Natural killer cell (primary cell): ENCODE measurements at regions of chr19 and their contacts with region 1.

Region 1: GRCh38 chr19:8580710-8581281 is 3.6 kb upstream of the MYO1F start:
- DNase-seq: peak; percentile 90 to 93
- ATAC-seq: peak; percentile 72 to 89 (median 77)
- H3K4me3 ChIP-seq: no peak overlapping the region
- H3K4me3 Mint-ChIP-seq: peak overlapping the region; percentile 9
- H3K27ac ChIP-seq: no peak overlapping the region
- H3K27ac Mint-ChIP-seq: no peak overlapping the region
- H3K4me1 ChIP-seq: peaks cover 42% of the 10 kb centered on the region
- H3K4me1 Mint-ChIP-seq: peaks cover 20 to 32% of the 10 kb centered on the region in 2 donors
- H3K27me3 ChIP-seq: no peaks in the 10 kb centered on the region
- H3K27me3 Mint-ChIP-seq: no peaks in the 10 kb centered on the region
- CTCF ChIP-seq: peak; percentile 100

Region 2: GRCh38 chr19:8352134-8352827 is 228.5 kb before region 1 on chr19:
- intact Hi-C with region 1: loop called (anchors 5 kb)
- DNase-seq: no peak
- ATAC-seq: no peak
- H3K4me3 ChIP-seq: no peak overlapping the region
- H3K4me3 Mint-ChIP-seq: no peak overlapping the region
- H3K27ac ChIP-seq: no peak overlapping the region
- H3K27ac Mint-ChIP-seq: no peak overlapping the region
- H3K4me1 ChIP-seq: peaks cover 9% of the 10 kb centered on the region
- H3K4me1 Mint-ChIP-seq: peaks cover 4 to 5% of the 10 kb centered on the region in 2 donors
- H3K27me3 ChIP-seq: peaks cover 6% of the 10 kb centered on the region
- H3K27me3 Mint-ChIP-seq: peaks cover 15 to 18% of the 10 kb centered on the region in 2 donors
- CTCF ChIP-seq: no peak

Region 3: GRCh38 chr19:8569066-8569771 is 11.6 kb before region 1 on chr19:
- intact Hi-C with region 1: loop called (anchors 1 kb)
- DNase-seq: peak; percentile 70 to 89
- ATAC-seq: peak; percentile 62 to 82 (median 74)
- H3K4me3 ChIP-seq: peak overlapping the region; percentile 9
- H3K4me3 Mint-ChIP-seq: peak overlapping the region; percentile 91
- H3K27ac ChIP-seq: peak overlapping the region; percentile 83
- H3K27ac Mint-ChIP-seq: peak overlapping the region; percentile 90 to 97
- H3K4me1 ChIP-seq: peaks cover 100% of the 10 kb centered on the region
- H3K4me1 Mint-ChIP-seq: peaks cover 71 to 84% of the 10 kb centered on the region in 2 donors
- H3K27me3 ChIP-seq: no peaks in the 10 kb centered on the region
- H3K27me3 Mint-ChIP-seq: no peaks in the 10 kb centered on the region
- CTCF ChIP-seq: no peak

Region 4: GRCh38 chr19:8592231-8593009 is 11.6 kb after region 1 on chr19:
- intact Hi-C with region 1: loop called (anchors 2 kb)
- DNase-seq: peak; percentile 97 to 99
- ATAC-seq: peak; percentile 86 to 94 (median 87)
- H3K4me3 ChIP-seq: peak overlapping the region; percentile 30
- H3K4me3 Mint-ChIP-seq: peak overlapping the region; percentile 82
- H3K27ac ChIP-seq: no peak overlapping the region
- H3K27ac Mint-ChIP-seq: peak overlapping the region; percentile 72 to 81
- H3K4me1 ChIP-seq: peaks cover 21% of the 10 kb centered on the region
- H3K4me1 Mint-ChIP-seq: peaks cover 24 to 38% of the 10 kb centered on the region in 2 donors
- H3K27me3 ChIP-seq: no peaks in the 10 kb centered on the region
- H3K27me3 Mint-ChIP-seq: no peaks in the 10 kb centered on the region
- CTCF ChIP-seq: no peak

Region 5: DNA sequence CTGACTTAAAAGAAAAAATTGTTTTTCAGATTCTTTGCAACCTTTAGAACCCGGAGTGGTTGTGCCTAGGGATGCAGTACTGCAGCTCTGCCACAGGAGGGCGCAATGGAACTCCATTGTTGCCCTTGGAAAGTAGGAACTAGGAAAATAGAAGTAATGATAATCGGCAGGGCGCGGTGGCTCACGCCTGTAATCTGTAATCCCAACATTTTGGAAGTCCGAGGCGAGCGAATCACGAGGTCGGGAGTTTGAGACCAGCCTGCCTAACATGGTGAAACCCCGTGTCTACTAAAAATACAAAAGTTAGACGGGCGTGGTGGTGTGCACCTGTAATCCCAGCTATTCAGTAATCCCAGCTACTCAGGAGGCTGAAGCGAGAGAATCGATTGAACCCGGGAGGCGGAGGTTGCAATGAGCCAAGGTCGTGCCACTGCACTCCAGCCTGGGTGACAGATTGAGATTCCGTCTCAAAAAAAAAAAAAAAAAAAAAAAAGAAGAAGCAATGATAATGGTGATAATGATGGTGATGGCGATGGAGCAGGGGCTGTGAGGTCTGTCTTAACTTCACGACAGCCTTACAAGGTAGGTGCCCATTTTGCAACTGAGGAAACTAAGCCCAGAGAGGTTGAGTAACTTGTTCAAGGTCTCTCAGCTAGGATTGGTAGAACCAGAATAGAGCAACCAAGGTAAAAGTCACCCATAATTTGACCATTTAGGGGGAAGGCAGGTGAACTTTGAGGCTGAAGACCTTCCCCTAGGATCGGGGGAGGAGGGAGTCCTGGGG is 35.2 kb after region 1 on chr19:
- intact Hi-C with region 1: loop called (anchors 5 kb)
- DNase-seq: peak; percentile 56 to 81
- ATAC-seq: peak; percentile 48 to 76 (median 58)
- H3K4me3 ChIP-seq: no peak overlapping the region
- H3K4me3 Mint-ChIP-seq: peak overlapping the region; percentile 11
- H3K27ac ChIP-seq: no peak overlapping the region
- H3K27ac Mint-ChIP-seq: peak overlapping the region; percentile 64 to 67
- H3K4me1 ChIP-seq: peaks cover 37% of the 10 kb centered on the region
- H3K4me1 Mint-ChIP-seq: peaks cover 27 to 38% of the 10 kb centered on the region in 2 donors
- H3K27me3 ChIP-seq: no peaks in the 10 kb centered on the region
- H3K27me3 Mint-ChIP-seq: peaks cover 0 to 12% of the 10 kb centered on the region in 2 donors
- CTCF ChIP-seq: peak; percentile 99

Region 6: GRCh38 chr19:8641908-8642547 is 61.2 kb after region 1 on chr19:
- intact Hi-C with region 1: loop called (anchors 1 kb)
- DNase-seq: peak in 1 of 2 donors; percentile 75
- ATAC-seq: peak; percentile 78 to 93 (median 89)
- H3K4me3 ChIP-seq: no peak overlapping the region
- H3K4me3 Mint-ChIP-seq: no peak overlapping the region
- H3K27ac ChIP-seq: no peak overlapping the region
- H3K27ac Mint-ChIP-seq: no peak overlapping the region
- H3K4me1 ChIP-seq: peaks cover 9% of the 10 kb centered on the region
- H3K4me1 Mint-ChIP-seq: peaks cover 15 to 24% of the 10 kb centered on the region in 2 donors
- H3K27me3 ChIP-seq: no peaks in the 10 kb centered on the region
- H3K27me3 Mint-ChIP-seq: peaks cover 5 to 19% of the 10 kb centered on the region in 2 donors
- CTCF ChIP-seq: peak; percentile 79

Region 7: GRCh38 chr19:8697671-8698432 is 117.1 kb after region 1 on chr19:
- intact Hi-C with region 1: loop called (anchors 2 kb)
- DNase-seq: peak in 1 of 2 donors; percentile 28
- ATAC-seq: no peak
- H3K4me3 ChIP-seq: no peak overlapping the region
- H3K4me3 Mint-ChIP-seq: no peak overlapping the region
- H3K27ac ChIP-seq: no peak overlapping the region
- H3K27ac Mint-ChIP-seq: no peak overlapping the region
- H3K4me1 ChIP-seq: peaks cover 59% of the 10 kb centered on the region
- H3K4me1 Mint-ChIP-seq: peaks cover 30 to 56% of the 10 kb centered on the region in 2 donors
- H3K27me3 ChIP-seq: no peaks in the 10 kb centered on the region
- H3K27me3 Mint-ChIP-seq: peaks cover 0 to 12% of the 10 kb centered on the region in 2 donors
- CTCF ChIP-seq: no peak

Region 8: GRCh38 chr19:9467161-9467560 is 886.4 kb after region 1 on chr19:
- intact Hi-C with region 1: no loop called
- DNase-seq: no peak
- ATAC-seq: no peak
- H3K4me3 ChIP-seq: no peak overlapping the region
- H3K4me3 Mint-ChIP-seq: no peak overlapping the region
- H3K27ac ChIP-seq: no peak overlapping the region
- H3K27ac Mint-ChIP-seq: no peak overlapping the region
- H3K4me1 ChIP-seq: no peaks in the 10 kb centered on the region
- H3K4me1 Mint-ChIP-seq: no peaks in the 10 kb centered on the region
- H3K27me3 ChIP-seq: no peaks in the 10 kb centered on the region
- H3K27me3 Mint-ChIP-seq: peaks cover 0 to 3% of the 10 kb centered on the region in 2 donors
- CTCF ChIP-seq: no peak